ENCODE measurements at regions of chr13 and their contacts with region 1.

Region 1: GRCh38 chr13:77329133-77329910 is 2.4 kb upstream of the MYCBP2 start:
- DNase-seq: peak; percentile 94
- H3K4me3 ChIP-seq: peak overlapping the region; percentile 67 to 90 (median 69)
- H3K27ac ChIP-seq: peak overlapping the region; percentile 75
- H3K4me1 ChIP-seq: peaks cover 31% of the 10 kb centered on the region
- H3K27me3 ChIP-seq: peaks cover 0 to 5% of the 10 kb centered on the region in 2 experiments
- CTCF ChIP-seq: no peak
- POLR2A ChIP-seq: peak; percentile 9

Region 2: GRCh38 chr13:76929320-76929719 is 400.0 kb before region 1 on chr13:
- CTCF ChIA-PET with region 1: no interaction called
- POLR2A ChIA-PET with region 1: no interaction called
- dilution Hi-C with region 1: no loop called
- intact Hi-C with region 1: no loop called
- DNase-seq: no peak
- H3K4me3 ChIP-seq: no peak overlapping the region
- H3K27ac ChIP-seq: no peak overlapping the region
- H3K4me1 ChIP-seq: no peaks in the 10 kb centered on the region
- H3K27me3 ChIP-seq: peaks cover 2 to 5% of the 10 kb centered on the region in 2 experiments
- CTCF ChIP-seq: no peak
- POLR2A ChIP-seq: no peak

Region 3: DNA sequence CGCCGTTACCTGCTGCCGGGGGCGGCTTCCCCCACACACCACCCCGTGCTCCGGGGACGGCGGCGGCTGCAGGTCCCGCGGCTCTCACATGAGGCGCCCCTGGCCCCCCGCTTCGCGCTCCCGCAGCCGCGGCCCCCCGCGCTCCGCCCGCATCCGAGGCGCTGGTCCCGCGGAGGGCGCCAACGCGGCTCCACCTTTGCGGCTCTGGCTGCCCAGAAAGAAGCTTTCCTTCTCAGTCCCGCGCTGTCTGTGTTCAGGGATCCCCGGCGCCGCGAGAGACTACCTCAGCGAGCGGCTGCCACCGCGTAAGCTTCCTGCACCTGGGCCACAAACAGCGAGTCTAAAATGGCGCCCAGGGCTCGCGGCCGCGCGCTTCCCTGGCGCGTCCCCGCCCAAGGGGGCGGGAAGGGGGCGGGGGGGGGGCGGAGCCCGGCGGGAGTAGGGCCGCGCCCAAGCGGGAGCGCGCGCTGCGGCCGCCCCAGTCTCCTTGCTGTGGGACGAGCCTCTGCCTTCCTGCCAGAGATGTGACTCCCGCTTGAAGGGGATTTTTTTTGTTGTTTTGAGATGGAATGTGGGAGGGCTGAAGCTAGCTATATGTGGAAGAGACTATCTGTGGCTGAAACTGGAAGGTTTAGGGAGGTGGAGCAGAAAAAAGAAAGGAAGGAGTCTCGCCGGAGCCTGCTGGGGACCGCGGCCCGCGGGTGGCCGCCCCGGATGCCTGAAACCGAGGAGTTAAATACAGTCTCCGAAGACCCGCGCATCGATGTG is 302.3 kb before region 1 on chr13 and contains the start of gene FBXL3:
- CTCF ChIA-PET with region 1: no interaction called
- POLR2A ChIA-PET with region 1: no interaction called
- dilution Hi-C with region 1: no loop called
- intact Hi-C with region 1: loop called (anchors 1 kb)
- DNase-seq: peak; percentile 73
- H3K4me3 ChIP-seq: peak within 1 kb of the TSS; percentile 79 to 94 (median 80)
- H3K27ac ChIP-seq: peak within 1 kb of the TSS; percentile 87
- H3K4me1 ChIP-seq: peaks cover 33% of the 10 kb centered on the region
- H3K27me3 ChIP-seq: no peaks in the 10 kb centered on the region
- CTCF ChIP-seq: no peak
- POLR2A ChIP-seq: no peak
- total RNA-seq, gene FBXL3: 35.9 and 37.8 TPM in 2 replicates

Region 4: DNA sequence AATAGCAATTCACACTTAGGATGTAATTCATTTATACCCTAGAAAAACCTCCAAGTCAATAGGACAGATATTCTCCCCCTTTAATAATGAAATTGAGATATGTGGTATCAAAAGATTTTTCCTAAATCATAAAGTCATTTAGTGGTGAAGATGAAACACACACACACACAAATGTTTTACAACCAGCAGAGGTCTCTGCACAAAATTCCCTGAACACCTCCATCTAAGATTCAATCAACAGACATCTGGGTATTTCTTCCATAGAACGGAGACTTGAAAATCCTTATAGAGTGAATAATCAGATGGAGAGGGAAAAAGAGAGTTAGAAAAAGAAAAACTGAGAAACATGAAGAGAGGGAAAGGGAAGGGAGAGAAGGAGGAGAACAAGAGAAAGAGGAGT is 55.2 kb before region 1 on chr13:
- CTCF ChIA-PET with region 1: interaction called, 6 read pairs
- POLR2A ChIA-PET with region 1: no interaction called
- dilution Hi-C with region 1: no loop called
- intact Hi-C with region 1: loop called (anchors 2 kb)
- DNase-seq: peak; percentile 6
- H3K4me3 ChIP-seq: no peak overlapping the region
- H3K27ac ChIP-seq: no peak overlapping the region
- H3K4me1 ChIP-seq: no peaks in the 10 kb centered on the region
- H3K27me3 ChIP-seq: no peaks in the 10 kb centered on the region
- CTCF ChIP-seq: no peak
- POLR2A ChIP-seq: no peak

Region 5: GRCh38 chr13:77316430-77316829 is 12.9 kb before region 1 on chr13:
- CTCF ChIA-PET with region 1: interaction called, 5 read pairs
- POLR2A ChIA-PET with region 1: no interaction called
- dilution Hi-C with region 1: no loop called
- intact Hi-C with region 1: loop called (anchors 1 kb)
- DNase-seq: peak; percentile 90
- H3K4me3 ChIP-seq: no peak overlapping the region
- H3K27ac ChIP-seq: peak overlapping the region; percentile 66
- H3K4me1 ChIP-seq: peaks cover 15% of the 10 kb centered on the region
- H3K27me3 ChIP-seq: no peaks in the 10 kb centered on the region
- CTCF ChIP-seq: no peak
- POLR2A ChIP-seq: no peak

Region 6: GRCh38 chr13:77565635-77566034 is 236.3 kb after region 1 on chr13:
- CTCF ChIA-PET with region 1: no interaction called
- POLR2A ChIA-PET with region 1: no interaction called
- dilution Hi-C with region 1: no loop called
- intact Hi-C with region 1: loop called (anchors 5 kb)
- DNase-seq: peak; percentile 71
- H3K4me3 ChIP-seq: no peak overlapping the region
- H3K27ac ChIP-seq: no peak overlapping the region
- H3K4me1 ChIP-seq: no peaks in the 10 kb centered on the region
- H3K27me3 ChIP-seq: peaks cover 5 to 8% of the 10 kb centered on the region in 2 experiments
- CTCF ChIP-seq: peak; percentile 28 to 33
- POLR2A ChIP-seq: no peak

Region 7: DNA sequence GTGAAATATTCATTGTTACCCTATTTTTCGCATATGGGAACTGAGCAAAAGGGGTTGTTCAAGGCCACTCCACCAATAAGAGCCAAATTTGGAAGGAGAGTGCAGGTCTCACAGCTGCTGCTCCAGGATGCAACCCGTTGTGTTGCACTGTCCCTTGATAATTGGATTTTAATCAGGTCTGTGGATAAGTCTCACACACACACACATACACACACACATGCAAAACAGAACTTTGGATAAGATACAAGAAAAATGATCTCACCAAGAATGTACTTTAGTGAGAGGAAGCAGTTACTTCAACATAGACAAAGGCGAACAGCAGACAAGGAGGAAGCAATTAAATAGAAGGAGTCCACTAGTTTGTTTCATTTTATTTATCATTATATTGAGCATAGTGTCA is 716.6 kb after region 1 on chr13:
- CTCF ChIA-PET with region 1: no interaction called
- POLR2A ChIA-PET with region 1: no interaction called
- dilution Hi-C with region 1: no loop called
- intact Hi-C with region 1: no loop called
- DNase-seq: peak; percentile 68
- H3K4me3 ChIP-seq: no peak overlapping the region
- H3K27ac ChIP-seq: peak overlapping the region; percentile 17
- H3K4me1 ChIP-seq: peaks cover 4% of the 10 kb centered on the region
- H3K27me3 ChIP-seq: no peaks in the 10 kb centered on the region
- CTCF ChIP-seq: no peak
- POLR2A ChIP-seq: no peak